ENCODE measurements at regions of chr2 and their contacts with region 1.

Region 1: GRCh38 chr2:160836755-160837154 is 323.5 kb upstream of the TANK start:
- DNase-seq: no peak
- ATAC-seq: no peak
- H3K4me3 ChIP-seq: no peak overlapping the region
- H3K27ac ChIP-seq: no peak overlapping the region
- H3K4me1 ChIP-seq: peaks cover 10% of the 10 kb centered on the region; the same call in 1 of the 2 replicates
- H3K27me3 ChIP-seq: no peaks in the 10 kb centered on the region; a peak in 1 of 5 replicates
- CTCF ChIP-seq: no peak
- EP300 ChIP-seq: no peak
- POLR2A ChIP-seq: no peak
- RAD21 ChIP-seq: no peak

Region 2: DNA sequence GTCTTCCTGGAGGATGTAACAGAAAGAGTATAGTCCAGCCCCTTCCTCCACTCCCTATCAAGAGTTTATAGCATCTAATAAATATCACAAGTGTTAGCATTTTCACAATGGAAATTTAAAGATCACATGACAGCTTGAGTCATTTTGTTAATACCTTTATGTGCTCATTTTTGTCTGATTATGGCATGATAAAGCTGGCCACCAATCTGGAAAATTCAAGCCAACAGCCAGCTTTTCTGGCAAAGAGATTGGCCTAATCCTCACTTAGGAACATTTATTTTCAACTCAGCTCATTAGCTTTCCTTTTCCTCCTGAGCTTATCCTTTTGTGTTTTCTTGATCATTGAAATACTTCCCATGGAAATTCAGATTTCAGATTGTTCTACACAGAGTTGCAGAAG is 80.3 kb before region 1 on chr2:
- CTCF ChIA-PET with region 1: no interaction called
- POLR2A ChIA-PET with region 1: no interaction called
- in situ Hi-C with region 1: no loop called
- intact Hi-C with region 1: loop called (anchors 10 kb)
- DNase-seq: no peak
- ATAC-seq: no peak
- H3K4me3 ChIP-seq: no peak overlapping the region
- H3K27ac ChIP-seq: no peak overlapping the region
- H3K4me1 ChIP-seq: no peaks in the 10 kb centered on the region
- H3K27me3 ChIP-seq: no peaks in the 10 kb centered on the region
- CTCF ChIP-seq: no peak
- EP300 ChIP-seq: no peak
- POLR2A ChIP-seq: no peak
- RAD21 ChIP-seq: no peak

Region 3: GRCh38 chr2:161116509-161116908 is 279.8 kb after region 1 on chr2:
- CTCF ChIA-PET with region 1: no interaction called
- POLR2A ChIA-PET with region 1: no interaction called
- in situ Hi-C with region 1: no loop called
- intact Hi-C with region 1: no loop called
- DNase-seq: no peak
- ATAC-seq: no peak
- H3K4me3 ChIP-seq: no peak overlapping the region
- H3K27ac ChIP-seq: no peak overlapping the region
- H3K4me1 ChIP-seq: peaks cover 43% of the 10 kb centered on the region
- H3K27me3 ChIP-seq: no peaks in the 10 kb centered on the region
- CTCF ChIP-seq: no peak
- EP300 ChIP-seq: no peak
- POLR2A ChIP-seq: no peak
- RAD21 ChIP-seq: no peak

Measured in HepG2 (cell line).